ENCODE measurements at regions of chr16 and their contacts with region 1.

Region 1: DNA sequence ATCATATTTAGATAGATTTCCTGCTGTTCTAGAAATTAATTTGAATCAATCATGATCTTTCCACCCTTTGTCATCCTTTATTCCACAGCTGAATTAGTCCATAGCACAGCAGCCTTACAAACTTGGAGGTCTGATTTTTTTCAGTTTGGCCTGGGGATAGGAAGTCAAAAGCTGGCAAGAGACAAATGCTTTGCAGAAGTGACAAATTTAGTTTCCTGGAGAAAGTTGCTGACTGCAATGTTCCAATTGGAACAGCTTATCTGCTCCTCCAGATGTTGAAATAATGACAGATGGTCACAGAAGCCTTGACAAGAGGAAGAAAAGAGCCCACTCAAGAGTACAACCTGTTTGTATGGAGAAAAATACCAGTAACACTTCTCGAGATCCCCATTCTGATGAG is 1276.1 kb upstream of the CDH8 start:
- DNase-seq: no peak
- ATAC-seq: peak; percentile 17

Region 2: GRCh38 chr16:63157818-63158217 is 154.5 kb before region 1 on chr16:
- intact Hi-C with region 1: no loop called
- DNase-seq: no peak
- ATAC-seq: no peak

Region 3: GRCh38 chr16:63337264-63337663 is 24.9 kb after region 1 on chr16:
- intact Hi-C with region 1: loop called (anchors 2 kb)
- DNase-seq: no peak
- ATAC-seq: no peak